ENCODE measurements at regions of chr4 and their contacts with region 1.

Region 1: DNA sequence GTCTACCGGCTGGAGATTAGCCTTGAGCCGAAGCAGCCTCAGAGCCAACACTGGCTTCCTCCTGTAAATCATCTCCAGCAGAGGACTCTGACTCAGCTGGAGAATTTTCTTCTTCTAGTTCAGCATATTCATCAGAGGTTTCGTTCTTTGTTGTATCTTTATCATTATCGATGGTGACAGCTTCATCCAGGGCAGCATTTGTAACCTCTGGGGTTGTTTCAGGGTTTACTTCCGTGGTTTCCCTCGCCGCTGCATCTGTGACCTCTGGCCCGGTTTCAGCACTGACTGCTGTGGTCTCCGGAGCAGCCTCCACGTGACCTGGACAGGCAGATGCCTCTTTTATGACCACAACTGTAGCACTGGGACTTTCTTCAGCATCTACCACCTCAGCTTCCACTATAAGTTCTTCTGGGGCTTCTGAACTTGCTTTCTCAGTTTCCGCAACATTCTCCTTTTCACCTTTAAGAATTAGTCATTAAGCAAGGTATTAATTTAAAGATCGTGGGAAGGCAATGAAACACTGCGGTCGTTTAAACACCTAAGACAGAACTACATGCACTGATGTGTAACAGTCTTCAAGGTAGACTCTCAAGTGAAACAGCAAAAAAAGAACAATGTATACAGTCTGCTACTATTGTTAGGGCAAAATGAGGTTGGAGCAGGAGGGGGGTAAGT is 13.3 kb downstream of the MGARP start:
- DNase-seq: peak; percentile 91
- H3K4me3 Mint-ChIP-seq: peak overlapping the region; percentile 52
- H3K27ac Mint-ChIP-seq: peak overlapping the region; percentile 60
- H3K4me1 Mint-ChIP-seq: peaks cover 18% of the 10 kb centered on the region
- H3K27me3 Mint-ChIP-seq: no peaks in the 10 kb centered on the region

Region 2: GRCh38 chr4:139083956-139084803 is 182.5 kb before region 1 on chr4:
- CTCF ChIA-PET with region 1: no interaction called
- intact Hi-C with region 1: loop called (anchors 1 kb)
- DNase-seq: peak; percentile 90
- H3K4me3 Mint-ChIP-seq: peak overlapping the region; percentile 99
- H3K27ac Mint-ChIP-seq: peak overlapping the region; percentile 99
- H3K4me1 Mint-ChIP-seq: peaks cover 30% of the 10 kb centered on the region
- H3K27me3 Mint-ChIP-seq: no peaks in the 10 kb centered on the region

Region 3: DNA sequence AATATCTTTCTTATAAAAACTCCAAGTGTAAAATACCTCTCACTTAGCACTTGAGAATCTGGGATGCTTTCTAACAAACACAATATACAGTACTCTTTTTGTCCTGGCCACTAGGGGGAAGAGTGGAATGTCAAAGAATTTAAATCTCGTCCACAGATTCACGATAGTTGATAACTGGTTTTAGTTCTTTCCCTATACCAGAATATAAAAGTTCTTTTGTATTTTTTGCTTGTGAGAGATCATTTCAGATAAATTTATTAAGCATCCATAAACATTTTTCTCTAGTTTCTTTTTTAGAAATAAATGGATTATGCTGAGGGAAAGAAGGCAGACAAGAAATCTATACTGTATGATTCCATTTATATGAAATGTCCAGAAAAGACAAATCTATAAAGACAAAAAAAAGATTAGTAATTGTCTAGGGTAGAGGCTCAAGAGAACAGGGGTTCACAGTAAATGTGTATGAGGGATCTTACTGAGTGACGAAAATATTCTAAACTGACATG is 37.1 kb before region 1 on chr4:
- CTCF ChIA-PET with region 1: interaction called, 5 read pairs
- intact Hi-C with region 1: loop called (anchors 2 kb)
- DNase-seq: no peak
- H3K4me3 Mint-ChIP-seq: no peak overlapping the region
- H3K27ac Mint-ChIP-seq: no peak overlapping the region
- H3K4me1 Mint-ChIP-seq: no peaks in the 10 kb centered on the region
- H3K27me3 Mint-ChIP-seq: no peaks in the 10 kb centered on the region

Region 4: DNA sequence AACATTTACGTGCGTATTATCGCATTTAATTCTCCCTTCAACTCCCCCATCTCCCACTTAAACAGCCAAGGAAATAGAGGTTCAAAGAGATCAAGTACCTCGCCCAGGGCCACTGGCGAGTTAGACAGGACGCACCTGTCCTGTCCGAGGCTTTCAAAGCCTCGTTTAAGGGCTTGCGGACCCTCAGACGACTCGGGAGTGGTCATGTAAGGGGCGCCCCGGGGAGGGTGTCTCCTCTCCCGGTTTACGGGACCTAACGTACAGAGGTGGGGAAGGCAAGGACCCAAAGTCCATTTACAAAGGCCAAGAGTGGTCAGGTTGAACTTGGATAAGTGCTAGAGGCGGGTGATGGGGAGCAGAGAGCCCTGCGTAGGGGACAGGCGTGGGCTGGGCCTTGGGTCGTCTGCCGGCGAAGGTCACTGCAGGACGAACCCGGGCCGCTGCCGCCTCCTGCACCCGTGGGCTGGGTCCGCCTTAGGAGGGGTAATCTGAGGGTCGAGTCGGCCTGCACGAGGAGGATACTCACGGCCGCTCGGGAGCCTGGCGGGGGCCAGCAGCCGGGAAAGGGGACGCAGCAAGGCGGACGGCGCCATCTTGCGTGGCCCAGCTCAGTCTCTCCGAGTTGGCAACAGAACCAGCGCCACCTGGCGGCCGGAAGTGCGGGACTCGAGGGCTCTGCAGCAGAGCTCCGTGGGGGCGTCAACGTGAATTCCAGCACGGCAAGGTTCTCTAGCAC is 28.7 kb after region 1 on chr4:
- CTCF ChIA-PET with region 1: interaction called, 16 read pairs
- intact Hi-C with region 1: loop called (anchors 1 kb)
- DNase-seq: peak; percentile 99
- H3K4me3 Mint-ChIP-seq: peak overlapping the region; percentile 90
- H3K27ac Mint-ChIP-seq: peak overlapping the region; percentile 97
- H3K4me1 Mint-ChIP-seq: peaks cover 42% of the 10 kb centered on the region
- H3K27me3 Mint-ChIP-seq: no peaks in the 10 kb centered on the region

Region 5: GRCh38 chr4:139333046-139333445 is 66.3 kb after region 1 on chr4:
- CTCF ChIA-PET with region 1: no interaction called
- intact Hi-C with region 1: loop called (anchors 2 kb)
- DNase-seq: no peak
- H3K4me3 Mint-ChIP-seq: no peak overlapping the region
- H3K27ac Mint-ChIP-seq: peak overlapping the region; percentile 68
- H3K4me1 Mint-ChIP-seq: peaks cover 53% of the 10 kb centered on the region
- H3K27me3 Mint-ChIP-seq: no peaks in the 10 kb centered on the region

Region 6: DNA sequence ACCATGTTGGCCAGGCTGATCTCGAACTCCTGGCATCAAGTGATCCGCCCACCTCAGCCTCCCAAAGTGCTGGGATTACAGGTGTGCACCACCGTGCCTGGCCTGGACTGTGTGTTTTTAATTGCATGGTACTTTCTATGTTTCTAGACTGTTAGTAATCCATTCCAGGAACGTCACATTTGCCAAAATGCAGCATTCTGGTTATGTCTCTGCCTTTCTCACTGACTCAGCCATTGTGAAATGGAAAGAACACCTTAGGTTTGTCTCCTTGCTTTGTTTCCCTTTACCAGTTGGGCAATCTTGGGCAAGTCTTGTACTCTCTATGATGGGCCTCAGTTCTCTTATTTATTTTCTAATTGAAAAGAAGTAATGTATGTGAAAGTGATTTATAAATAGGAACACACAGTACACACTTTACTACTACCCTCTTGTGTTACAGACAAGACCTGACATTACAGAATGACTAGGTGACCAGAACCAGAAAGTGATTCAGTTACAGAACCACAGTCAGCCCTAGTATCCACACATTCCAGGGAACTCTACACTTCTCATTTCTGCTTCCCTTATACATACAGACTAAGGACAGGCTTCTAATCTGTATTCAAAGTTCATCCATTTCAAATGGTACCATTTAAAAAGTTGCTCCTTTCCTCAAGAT is 586.0 kb after region 1 on chr4:
- CTCF ChIA-PET with region 1: no interaction called
- intact Hi-C with region 1: no loop called
- DNase-seq: peak; percentile 22
- H3K4me3 Mint-ChIP-seq: no peak overlapping the region
- H3K27ac Mint-ChIP-seq: no peak overlapping the region
- H3K4me1 Mint-ChIP-seq: peaks cover 7% of the 10 kb centered on the region
- H3K27me3 Mint-ChIP-seq: peaks cover 19% of the 10 kb centered on the region

Region 7: DNA sequence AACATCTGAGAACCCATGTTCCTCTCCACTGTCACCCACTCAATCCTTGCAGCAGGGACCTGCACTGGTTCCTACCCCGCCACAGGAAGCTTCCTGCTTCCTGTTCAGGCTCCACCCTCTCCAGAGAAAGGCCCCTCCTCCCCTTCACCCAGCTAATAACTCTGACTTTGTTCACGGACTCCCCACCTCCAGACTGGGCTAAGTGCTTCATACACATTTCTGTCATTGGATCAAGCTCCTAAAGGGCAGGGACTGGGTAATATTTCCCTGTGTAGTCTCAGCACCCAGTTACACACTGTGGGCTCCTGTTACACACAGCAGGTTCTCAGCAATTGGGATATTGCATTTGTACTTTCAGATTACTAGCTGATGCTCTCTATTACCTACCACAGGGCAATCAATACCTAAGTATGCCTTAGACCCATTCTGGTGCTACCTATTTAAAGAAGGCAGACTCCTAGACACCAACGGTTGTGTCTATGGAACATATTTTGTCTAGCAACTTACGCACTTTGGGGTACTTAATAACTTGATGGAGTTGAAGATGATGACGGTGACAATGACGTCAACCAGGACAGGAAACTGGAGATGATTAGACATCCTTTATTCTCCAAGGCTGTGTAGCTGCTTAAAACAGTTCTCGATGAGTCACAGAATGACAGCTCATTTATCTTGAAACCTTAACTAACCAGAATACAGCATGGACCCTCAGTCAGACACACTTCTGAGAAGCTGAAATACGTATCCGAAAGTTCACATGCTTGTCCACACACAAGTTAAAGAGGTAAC is 829.2 kb after region 1 on chr4:
- CTCF ChIA-PET with region 1: no interaction called
- intact Hi-C with region 1: loop called (anchors 5 kb)
- DNase-seq: peak; percentile 91
- H3K4me3 Mint-ChIP-seq: peak overlapping the region; percentile 90
- H3K27ac Mint-ChIP-seq: peak overlapping the region; percentile 99
- H3K4me1 Mint-ChIP-seq: peaks cover 77% of the 10 kb centered on the region
- H3K27me3 Mint-ChIP-seq: no peaks in the 10 kb centered on the region

Measured in activated naive CD4-positive, alpha-beta T cell treated with anti-CD3 and anti-CD28 coated beads for 36 hours (primary cell).